ENCODE measurements at regions of chr10 and their contacts with region 1.

Region 1: DNA sequence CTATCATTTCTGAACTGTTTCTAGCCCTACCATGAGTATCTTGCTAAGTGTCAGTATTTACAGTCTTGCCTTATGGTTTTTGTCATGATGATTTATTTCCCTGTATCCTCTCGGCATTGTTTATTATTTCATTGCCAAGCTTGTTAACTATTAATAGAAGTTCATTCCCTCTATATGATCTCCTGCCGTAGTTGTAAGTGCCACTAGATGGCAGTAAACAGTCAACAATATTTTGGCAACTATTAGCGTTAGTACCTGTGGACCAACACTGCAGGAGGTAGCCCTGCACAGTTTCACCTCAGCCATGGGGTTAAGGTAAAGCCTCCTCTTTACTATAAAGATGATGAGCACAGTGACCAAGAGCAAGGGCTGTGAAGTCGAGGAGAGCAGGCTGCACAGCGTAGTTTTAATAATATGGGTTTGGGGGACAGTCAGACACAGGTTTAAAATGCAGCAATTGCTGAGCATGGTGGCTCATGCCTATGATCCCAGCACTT is 26.1 kb upstream of the CCNJ start:
- DNase-seq: peak; percentile 65
- H3K4me3 ChIP-seq: no peak overlapping the region
- H3K27ac ChIP-seq: no peak overlapping the region
- H3K4me1 ChIP-seq: no peaks in the 10 kb centered on the region
- H3K27me3 ChIP-seq: no peaks in the 10 kb centered on the region; the same call in 1 of the 2 replicates

Region 2: GRCh38 chr10:95388539-95388938 is 628.7 kb before region 1 on chr10:
- in situ Hi-C with region 1: no loop called
- DNase-seq: no peak
- H3K4me3 ChIP-seq: no peak overlapping the region
- H3K27ac ChIP-seq: no peak overlapping the region
- H3K4me1 ChIP-seq: no peaks in the 10 kb centered on the region
- H3K27me3 ChIP-seq: 0 out of 2 replicates have a peak, but pooled peaks cover 7% of the 10 kb centered on the region

Region 3: DNA sequence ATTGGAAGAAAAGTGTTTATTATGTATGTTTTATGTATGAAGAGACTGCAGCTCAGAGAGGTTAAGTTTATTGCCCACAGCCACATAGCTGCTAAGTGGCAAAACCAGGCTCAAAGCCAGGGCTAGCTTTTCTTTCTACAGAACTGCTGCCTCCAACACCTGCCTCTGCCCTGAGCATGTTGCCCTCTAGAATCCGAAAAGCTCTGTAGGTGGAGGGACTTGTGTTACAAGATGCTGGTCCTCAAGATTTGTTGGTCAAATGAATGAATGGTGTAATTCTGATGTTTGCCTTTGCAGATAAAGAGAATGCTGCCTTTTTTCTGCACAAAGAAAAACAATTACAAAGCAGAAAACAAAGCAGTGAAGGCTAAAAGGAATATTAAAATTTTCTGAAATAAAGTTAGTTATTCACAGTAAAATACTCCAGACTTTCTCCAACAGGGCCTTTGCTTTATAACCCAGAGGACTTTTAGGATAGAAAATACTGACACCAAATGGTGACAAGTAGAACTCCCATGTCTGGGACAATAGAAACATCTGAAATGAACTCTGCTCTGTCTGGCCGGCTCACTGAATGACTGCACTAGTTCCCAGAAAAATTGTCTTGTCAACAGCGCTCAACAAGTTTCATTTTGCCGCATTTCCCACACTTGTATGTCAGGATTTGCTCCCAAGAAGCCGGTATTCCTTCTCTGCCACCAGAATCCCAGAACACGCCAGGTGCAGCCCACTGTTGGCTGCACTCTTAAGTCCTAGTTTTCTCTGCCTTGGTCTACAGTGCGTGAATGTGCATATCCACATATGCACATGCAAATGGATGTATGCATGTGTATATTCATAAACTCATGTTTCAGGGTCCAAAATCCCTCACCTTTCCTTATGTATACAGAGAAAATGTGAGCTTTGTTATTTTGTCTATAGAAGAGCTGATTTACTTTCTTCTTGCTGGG is 276.0 kb after region 1 on chr10:
- in situ Hi-C with region 1: loop called (anchors 25 kb)
- DNase-seq: peak; percentile 64
- H3K4me3 ChIP-seq: no peak overlapping the region
- H3K27ac ChIP-seq: no peak overlapping the region
- H3K4me1 ChIP-seq: no peaks in the 10 kb centered on the region
- H3K27me3 ChIP-seq: no peaks in the 10 kb centered on the region; the same call in 1 of the 2 replicates

Region 4: DNA sequence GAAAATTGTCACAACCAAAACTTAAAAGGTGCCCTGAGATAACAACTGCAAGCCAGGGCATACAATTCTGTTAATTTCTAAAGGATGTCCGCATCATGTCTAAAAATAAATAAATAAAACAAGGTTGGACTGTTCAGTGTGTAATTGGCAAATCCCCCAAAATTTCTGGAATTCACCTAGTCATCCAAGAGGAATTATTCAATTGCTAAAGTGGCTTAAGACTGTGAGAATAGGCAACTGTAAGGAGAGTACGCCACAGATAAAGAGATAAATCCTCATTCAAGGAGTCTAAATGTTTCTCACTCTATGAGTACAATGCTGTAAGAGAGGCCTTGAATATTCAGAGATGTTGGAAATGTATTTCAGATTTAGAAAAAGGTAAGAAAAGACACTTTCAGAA is 665.8 kb after region 1 on chr10:
- in situ Hi-C with region 1: no loop called
- DNase-seq: peak; percentile 65
- H3K4me3 ChIP-seq: no peak overlapping the region
- H3K27ac ChIP-seq: no peak overlapping the region
- H3K4me1 ChIP-seq: peaks cover 5% of the 10 kb centered on the region; the same call in 1 of the 2 replicates
- H3K27me3 ChIP-seq: no peaks in the 10 kb centered on the region